GM12878 (cell line): ENCODE measurements at regions of chr5 and their contacts with region 1.

Region 1: DNA sequence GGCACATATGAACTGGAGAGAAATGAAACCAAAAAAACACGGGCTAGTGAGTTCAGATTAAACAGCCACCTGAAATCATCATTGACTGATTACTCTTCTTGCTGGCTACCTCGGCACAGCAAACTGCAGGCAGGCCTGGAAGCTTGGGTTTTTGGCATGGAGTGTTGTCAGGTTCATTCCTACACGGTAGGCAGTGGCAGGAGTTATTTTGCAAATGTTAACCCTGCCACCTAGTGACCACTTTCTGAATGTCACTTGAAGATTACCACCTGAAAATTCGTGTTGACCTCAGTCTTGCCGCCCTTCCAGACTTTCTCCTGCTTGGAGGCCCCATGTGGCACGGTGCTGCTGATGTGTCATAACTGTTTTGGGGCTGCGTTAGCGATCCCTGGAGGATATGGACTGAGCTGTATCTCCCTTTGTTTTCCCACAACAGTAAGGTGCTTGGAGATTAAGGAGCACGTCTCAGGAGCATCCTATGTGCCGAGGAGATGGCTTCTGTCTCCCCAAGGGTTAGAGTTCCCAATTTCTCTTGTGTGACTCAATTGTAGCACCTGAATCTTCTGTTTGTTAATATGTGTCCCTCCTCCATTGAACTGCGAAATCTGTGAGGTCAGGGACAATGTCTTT is 12.7 kb upstream of the CD180 start:
- DNase-seq: no peak
- ATAC-seq: peak; percentile 56
- H3K4me3 ChIP-seq: no peak overlapping the region
- H3K27ac ChIP-seq: no peak overlapping the region
- H3K4me1 ChIP-seq: peaks cover 38% of the 10 kb centered on the region
- H3K27me3 ChIP-seq: no peaks in the 10 kb centered on the region
- CTCF ChIP-seq: peak; percentile 68 to 88 (median 71)
- EP300 ChIP-seq: no peak
- POLR2A ChIP-seq: no peak
- RAD21 ChIP-seq: peak; percentile 78

Region 2: DNA sequence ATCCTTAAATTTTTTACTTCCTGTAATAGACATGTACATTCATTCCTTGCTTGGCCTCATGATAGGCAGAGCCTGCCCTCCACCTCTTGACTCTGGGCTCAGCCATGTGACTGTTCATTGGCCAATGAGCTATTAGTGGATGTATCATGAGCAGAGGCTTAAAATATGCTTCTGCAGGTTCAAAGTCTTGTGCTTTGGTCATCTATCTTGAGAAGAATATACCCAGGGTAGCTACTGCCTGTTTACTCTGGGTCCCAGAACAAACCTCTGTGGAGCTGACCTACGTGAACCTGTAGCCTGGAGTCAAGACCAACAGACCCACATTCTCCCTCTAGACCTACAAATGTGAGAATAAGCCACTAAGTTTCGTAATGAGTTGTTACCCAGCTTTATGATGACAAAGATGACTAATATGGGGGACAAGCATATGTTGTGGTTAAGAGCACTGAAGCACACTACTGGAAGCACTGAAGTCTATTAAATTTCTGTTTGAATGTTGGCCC is 368.7 kb before region 1 on chr5:
- CTCF ChIA-PET with region 1: no interaction called
- POLR2A ChIA-PET with region 1: no interaction called
- RAD21 ChIA-PET with region 1: no interaction called
- SMC1A ChIA-PET with region 1: no interaction called
- in situ Hi-C with region 1: no loop called
- intact Hi-C with region 1: loop called (anchors 10 kb)
- DNase-seq: peak; percentile 78
- ATAC-seq: peak; percentile 97
- H3K4me3 ChIP-seq: no peak overlapping the region
- H3K27ac ChIP-seq: no peak overlapping the region
- H3K4me1 ChIP-seq: peaks cover 7% of the 10 kb centered on the region
- H3K27me3 ChIP-seq: peaks cover 0 to 6% of the 10 kb centered on the region in 2 experiments; a peak in 2 of 4 replicates
- CTCF ChIP-seq: no peak
- EP300 ChIP-seq: peak; percentile 52 to 54; a peak in 2 of 4 replicates
- POLR2A ChIP-seq: no peak
- RAD21 ChIP-seq: no peak

Region 3: GRCh38 chr5:66923457-66923856 is 285.8 kb before region 1 on chr5:
- CTCF ChIA-PET with region 1: no interaction called
- POLR2A ChIA-PET with region 1: no interaction called
- RAD21 ChIA-PET with region 1: no interaction called
- SMC1A ChIA-PET with region 1: no interaction called
- in situ Hi-C with region 1: no loop called
- intact Hi-C with region 1: no loop called
- DNase-seq: no peak
- ATAC-seq: no peak
- H3K4me3 ChIP-seq: no peak overlapping the region
- H3K27ac ChIP-seq: no peak overlapping the region
- H3K4me1 ChIP-seq: no peaks in the 10 kb centered on the region
- H3K27me3 ChIP-seq: no peaks in the 10 kb centered on the region
- CTCF ChIP-seq: no peak
- EP300 ChIP-seq: no peak
- POLR2A ChIP-seq: no peak
- RAD21 ChIP-seq: no peak

Region 4: GRCh38 chr5:67065237-67065636 is 144.0 kb before region 1 on chr5:
- CTCF ChIA-PET with region 1: no interaction called
- POLR2A ChIA-PET with region 1: no interaction called
- RAD21 ChIA-PET with region 1: no interaction called
- SMC1A ChIA-PET with region 1: no interaction called
- in situ Hi-C with region 1: no loop called
- intact Hi-C with region 1: loop called (anchors 10 kb)
- DNase-seq: peak; percentile 8
- ATAC-seq: peak; percentile 87
- H3K4me3 ChIP-seq: no peak overlapping the region
- H3K27ac ChIP-seq: no peak overlapping the region
- H3K4me1 ChIP-seq: peaks cover 4% of the 10 kb centered on the region; the same call in 1 of the 2 replicates
- H3K27me3 ChIP-seq: no peaks in the 10 kb centered on the region
- CTCF ChIP-seq: no peak
- EP300 ChIP-seq: no peak
- POLR2A ChIP-seq: no peak
- RAD21 ChIP-seq: no peak

Region 5: DNA sequence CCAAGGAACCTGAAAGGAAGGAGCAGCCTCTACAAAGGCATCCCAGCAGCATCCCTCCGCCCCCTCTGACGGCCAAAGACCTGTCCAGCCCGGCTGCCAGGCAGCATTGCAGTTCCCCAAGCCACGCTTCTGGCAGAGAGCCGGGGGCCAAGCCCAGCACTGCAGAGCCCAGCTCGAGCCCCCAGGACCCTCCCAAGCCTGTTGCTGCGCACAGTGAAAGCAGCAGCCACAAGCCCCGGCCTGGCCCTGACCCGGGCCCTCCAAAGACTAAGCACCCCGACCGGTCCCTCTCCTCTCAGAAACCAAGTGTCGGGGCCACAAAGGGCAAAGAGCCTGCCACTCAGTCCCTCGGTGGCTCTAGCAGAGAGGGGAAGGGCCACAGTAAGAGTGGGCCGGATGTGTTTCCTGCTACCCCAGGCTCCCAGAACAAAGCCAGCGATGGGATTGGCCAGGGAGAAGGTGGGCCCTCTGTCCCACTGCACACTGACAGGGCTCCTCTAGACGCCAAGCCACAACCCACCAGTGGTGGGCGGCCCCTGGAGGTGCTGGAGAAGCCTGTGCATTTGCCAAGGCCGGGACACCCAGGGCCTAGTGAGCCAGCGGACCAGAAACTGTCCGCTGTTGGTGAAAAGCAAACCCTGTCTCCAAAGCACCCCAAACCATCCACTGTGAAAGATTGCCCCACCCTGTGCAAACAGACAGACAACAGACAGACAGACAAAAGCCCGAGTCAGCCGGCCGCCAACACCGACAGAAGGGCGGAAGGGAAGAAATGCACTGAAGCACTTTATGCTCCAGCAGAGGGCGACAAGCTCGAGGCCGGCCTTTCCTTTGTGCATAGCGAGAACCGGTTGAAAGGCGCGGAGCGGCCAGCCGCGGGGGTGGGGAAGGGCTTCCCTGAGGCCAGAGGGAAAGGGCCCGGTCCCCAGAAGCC is 43.5 kb before region 1 on chr5:
- CTCF ChIA-PET with region 1: interaction called, 137 read pairs
- POLR2A ChIA-PET with region 1: interaction called, 4 read pairs
- RAD21 ChIA-PET with region 1: interaction called, 71 read pairs
- SMC1A ChIA-PET with region 1: interaction called, 29 read pairs
- in situ Hi-C with region 1: loop called (anchors 5 kb)
- intact Hi-C with region 1: loop called (anchors 1 kb)
- DNase-seq: no peak
- ATAC-seq: peak; percentile 93
- H3K4me3 ChIP-seq: no peak overlapping the region
- H3K27ac ChIP-seq: peak overlapping the region; percentile 37
- H3K4me1 ChIP-seq: peaks cover 8% of the 10 kb centered on the region
- H3K27me3 ChIP-seq: no peaks in the 10 kb centered on the region; a peak in 1 of 4 replicates
- CTCF ChIP-seq: peak; percentile 64 to 78 (median 68)
- EP300 ChIP-seq: no peak
- POLR2A ChIP-seq: no peak
- RAD21 ChIP-seq: peak; percentile 88